ENCODE measurements at regions of chr6 and their contacts with region 1.

Region 1: GRCh38 chr6:111861431-111861885 is 11.8 kb downstream of the FYN start:
- DNase-seq: no peak
- ATAC-seq: no peak
- H3K4me3 ChIP-seq: no peak overlapping the region
- H3K27ac ChIP-seq: no peak overlapping the region
- H3K4me1 ChIP-seq: peaks cover 7 to 85% (median 58%) of the 10 kb centered on the region in 9 donors
- H3K27me3 ChIP-seq: no peaks in the 10 kb centered on the region
- CTCF ChIP-seq: no peak

Region 2: GRCh38 chr6:111818539-111819226 is 42.8 kb before region 1 on chr6:
- intact Hi-C with region 1: loop called in 1 of 10 experiments (anchors 5 kb)
- DNase-seq: no peak
- ATAC-seq: peak in 6 of 8 donors; percentile 20 to 48 (median 31)
- H3K4me3 ChIP-seq: no peak overlapping the region
- H3K27ac ChIP-seq: peak overlapping the region in 1 of 10 donors; percentile 11
- H3K4me1 ChIP-seq: peaks cover 10 to 62% (median 42%) of the 10 kb centered on the region in 9 donors
- H3K27me3 ChIP-seq: no peaks in the 10 kb centered on the region
- CTCF ChIP-seq: no peak

Measured in heart right ventricle (tissue), 16 donors.